Endothelial cell of umbilical vein (primary cell): ENCODE measurements at regions of chr9 and their contacts with region 1.

Region 1: DNA sequence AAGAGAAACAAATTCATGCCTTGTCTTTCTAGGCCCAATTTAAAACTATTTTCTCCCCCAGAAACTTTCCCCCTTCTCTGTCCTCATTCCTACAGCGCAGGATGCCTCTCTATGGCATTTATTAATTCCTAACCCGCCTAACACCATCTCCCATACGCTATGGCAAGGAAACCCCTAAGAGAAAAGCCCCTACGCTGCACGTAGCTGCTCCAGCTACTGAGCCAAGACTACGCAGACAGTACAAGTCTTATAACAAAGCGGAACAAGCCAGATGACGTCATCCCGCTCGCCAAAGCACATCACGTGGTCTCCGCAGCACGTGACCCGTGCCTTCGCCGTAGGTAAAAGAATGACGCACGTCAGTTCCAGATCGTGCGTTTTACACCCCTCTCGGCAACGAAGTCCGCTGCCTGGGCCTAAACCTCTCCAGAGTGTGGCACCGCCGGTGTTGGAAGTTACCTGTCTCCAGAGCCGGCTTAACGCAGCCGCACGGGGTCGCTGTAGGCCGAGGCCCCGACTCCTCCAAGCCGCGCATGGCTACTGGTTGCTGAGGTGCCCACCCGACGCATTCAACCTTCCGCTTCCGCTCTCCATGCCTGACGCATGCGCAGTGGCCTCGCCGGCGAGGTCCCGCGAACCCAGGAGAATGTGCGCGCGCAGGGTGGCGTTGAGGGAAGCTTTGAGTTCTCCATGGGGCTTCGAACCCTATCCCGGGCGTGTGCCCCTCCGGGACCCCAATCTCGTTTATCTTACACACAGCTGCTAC is at the start of gene TRMO:
- DNase-seq: peak; percentile 98
- H3K4me3 ChIP-seq: peak within 1 kb of the TSS; percentile 15 to 71 (median 56)
- H3K27ac ChIP-seq: peak within 1 kb of the TSS; percentile 89
- H3K4me1 ChIP-seq: peaks cover 11% of the 10 kb centered on the region
- H3K27me3 ChIP-seq: peaks cover 8 to 22% of the 10 kb centered on the region in 2 experiments
- CTCF ChIP-seq: peak; percentile 61 to 76
- POLR2A ChIP-seq: peak; percentile 98
- total RNA-seq, gene TRMO: 10.1 and 10.9 TPM in 2 replicates

Region 2: GRCh38 chr9:97411789-97412625 is 510.1 kb before region 1 on chr9 and contains the start of gene TDRD7:
- CTCF ChIA-PET with region 1: no interaction called
- POLR2A ChIA-PET with region 1: no interaction called
- dilution Hi-C with region 1: no loop called
- intact Hi-C with region 1: loop called (anchors 5 kb)
- DNase-seq: peak; percentile 82
- H3K4me3 ChIP-seq: peak within 1 kb of the TSS; percentile 73 to 92 (median 90)
- H3K27ac ChIP-seq: peak within 1 kb of the TSS; percentile 11
- H3K4me1 ChIP-seq: peaks cover 8% of the 10 kb centered on the region
- H3K27me3 ChIP-seq: peaks cover 23 to 29% of the 10 kb centered on the region in 2 experiments
- CTCF ChIP-seq: peak; percentile 99
- POLR2A ChIP-seq: no peak
- total RNA-seq, gene TDRD7: 11.2 and 11.5 TPM in 2 replicates

Region 3: DNA sequence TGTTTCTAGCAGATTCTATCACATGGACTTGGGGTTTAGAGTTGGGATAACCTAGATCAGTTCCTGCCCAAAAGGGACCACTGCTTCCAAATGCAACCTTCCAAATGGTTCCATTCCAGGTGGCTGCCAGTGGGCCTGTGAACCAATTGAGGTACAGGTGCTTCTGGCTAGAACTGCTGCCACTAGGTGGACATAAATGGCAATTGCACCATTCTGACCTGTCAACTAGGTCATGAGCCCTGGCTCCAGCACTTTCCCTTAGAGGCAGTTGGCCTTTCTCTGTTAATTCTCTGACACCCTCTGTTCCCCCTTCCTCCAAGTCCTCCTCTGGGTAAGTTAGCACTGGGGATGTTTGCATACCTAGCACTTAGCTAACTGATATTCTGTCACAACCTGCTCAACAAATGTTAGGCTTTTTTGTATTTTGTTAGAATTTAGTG is 32.4 kb after region 1 on chr9:
- CTCF ChIA-PET with region 1: interaction called, 3 read pairs
- POLR2A ChIA-PET with region 1: no interaction called
- dilution Hi-C with region 1: no loop called
- intact Hi-C with region 1: loop called (anchors 1 kb)
- DNase-seq: peak; percentile 21
- H3K4me3 ChIP-seq: no peak overlapping the region
- H3K27ac ChIP-seq: no peak overlapping the region
- H3K4me1 ChIP-seq: no peaks in the 10 kb centered on the region
- H3K27me3 ChIP-seq: peaks cover 2 to 3% of the 10 kb centered on the region in 2 experiments
- CTCF ChIP-seq: peak; percentile 37 to 58
- POLR2A ChIP-seq: no peak

Region 4: DNA sequence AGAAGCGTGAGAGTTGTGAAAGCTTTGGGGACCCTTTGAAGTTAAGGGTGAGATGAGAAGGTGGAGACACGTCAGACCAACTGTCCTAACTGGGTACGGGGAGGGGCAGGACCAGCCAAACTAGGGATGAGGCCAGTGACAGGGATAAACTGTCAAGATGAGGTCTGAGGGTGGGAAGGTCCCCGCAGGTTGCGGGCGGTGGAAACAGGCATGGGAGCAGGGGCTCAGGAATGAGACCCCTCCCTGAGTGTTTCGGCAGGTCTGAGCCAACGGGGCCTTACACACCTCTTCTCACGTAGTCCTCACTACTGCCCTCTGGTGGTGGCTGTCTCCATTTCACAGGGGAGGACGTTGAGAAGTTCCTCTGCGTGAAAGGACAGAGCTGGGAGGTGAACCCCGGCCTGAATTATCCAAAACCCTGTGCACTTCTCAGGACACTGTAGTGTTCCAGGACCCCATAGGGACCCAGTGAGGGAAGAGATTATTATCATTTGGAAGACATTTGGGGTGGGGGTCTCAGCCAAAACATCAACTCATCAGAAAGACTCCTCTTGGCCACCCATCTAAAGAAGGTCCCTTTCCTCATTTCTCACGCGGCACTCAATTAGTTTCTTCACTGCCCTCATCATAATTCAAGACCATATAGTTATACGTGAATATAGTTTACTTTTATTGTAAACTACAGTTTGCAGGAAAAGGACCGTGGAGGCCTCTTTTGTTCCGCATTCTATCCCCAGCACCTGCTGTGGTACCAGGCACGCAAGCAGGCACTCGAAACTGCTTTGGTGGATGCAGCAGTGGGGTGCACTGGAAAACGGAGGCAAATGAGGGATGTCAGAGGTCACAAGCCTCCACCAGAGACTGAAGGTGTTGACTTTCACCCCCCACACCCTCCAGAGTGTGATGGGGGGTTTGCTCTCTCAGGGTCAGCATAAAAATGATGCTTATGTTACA is 112.7 kb after region 1 on chr9:
- CTCF ChIA-PET with region 1: interaction called, 26 read pairs
- POLR2A ChIA-PET with region 1: no interaction called
- dilution Hi-C with region 1: no loop called
- intact Hi-C with region 1: loop called (anchors 1 kb)
- DNase-seq: peak; percentile 75
- H3K4me3 ChIP-seq: no peak overlapping the region
- H3K27ac ChIP-seq: peak overlapping the region; percentile 65
- H3K4me1 ChIP-seq: peaks cover 13% of the 10 kb centered on the region
- H3K27me3 ChIP-seq: no peaks in the 10 kb centered on the region
- CTCF ChIP-seq: peak; percentile 74 to 87
- POLR2A ChIP-seq: no peak

Region 5: DNA sequence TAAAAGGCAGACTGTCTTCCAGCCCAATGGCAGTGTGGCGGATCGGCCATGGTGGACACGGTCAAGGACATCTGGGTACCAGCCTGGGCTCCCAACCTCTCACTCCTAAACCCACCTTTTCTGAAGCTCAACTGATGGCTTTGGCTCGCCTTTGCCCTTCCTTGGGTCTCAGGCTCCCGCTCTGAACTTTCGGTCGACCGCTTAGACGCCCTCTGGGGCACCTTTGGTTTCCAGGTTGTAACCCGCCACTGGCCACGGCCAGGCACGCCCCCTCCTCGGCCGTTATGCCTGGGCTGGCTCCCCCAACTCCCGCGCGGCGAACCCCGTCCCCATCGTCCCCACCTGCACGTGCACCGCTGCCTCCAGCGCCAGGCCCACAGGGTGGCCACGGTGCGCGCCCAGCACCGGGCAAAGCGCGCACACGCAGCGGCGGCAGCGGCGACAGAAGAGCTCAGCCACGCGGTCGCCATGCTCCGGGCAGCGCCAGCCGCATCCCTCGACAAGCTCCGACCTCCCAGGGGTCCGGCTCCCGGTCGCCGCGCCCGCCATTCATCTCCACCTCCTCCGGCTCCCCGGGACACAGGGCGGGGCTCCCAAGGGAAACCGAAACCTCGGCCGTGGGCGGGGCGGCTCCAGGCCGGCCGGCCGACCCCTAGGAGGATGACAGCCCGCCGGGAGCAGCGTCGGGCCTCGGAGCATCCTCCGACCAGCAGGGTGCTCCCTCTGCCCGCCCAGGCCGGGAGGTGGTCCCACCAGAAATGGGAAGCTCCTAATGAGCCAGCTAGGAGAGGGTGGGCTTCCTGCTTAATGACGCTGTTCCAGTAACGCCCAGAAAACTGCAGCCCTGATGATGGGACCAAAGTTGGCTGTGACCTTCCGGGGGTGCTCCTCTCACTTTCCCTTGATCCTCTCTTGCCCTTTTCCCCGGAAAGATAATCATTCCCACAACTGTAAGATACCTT is 196.8 kb after region 1 on chr9 and contains the start of gene TRIM14:
- CTCF ChIA-PET with region 1: no interaction called
- POLR2A ChIA-PET with region 1: no interaction called
- dilution Hi-C with region 1: no loop called
- intact Hi-C with region 1: loop called (anchors 1 kb)
- DNase-seq: peak; percentile 57
- H3K4me3 ChIP-seq: peak within 1 kb of the TSS; percentile 39 to 84 (median 62)
- H3K27ac ChIP-seq: no peak within 1 kb of the TSS
- H3K4me1 ChIP-seq: peaks cover 12% of the 10 kb centered on the region
- H3K27me3 ChIP-seq: no peaks in the 10 kb centered on the region
- CTCF ChIP-seq: peak in 1 of 2 donors; percentile 20
- POLR2A ChIP-seq: no peak
- total RNA-seq, gene TRIM14: 7.1 and 10.7 TPM in 2 replicates

Region 6: GRCh38 chr9:98255578-98256296 is 333.6 kb after region 1 on chr9 and contains the start of gene TBC1D2:
- CTCF ChIA-PET with region 1: interaction called, 15 read pairs
- POLR2A ChIA-PET with region 1: no interaction called
- dilution Hi-C with region 1: no loop called
- intact Hi-C with region 1: loop called (anchors 1 kb)
- DNase-seq: peak; percentile 94
- H3K4me3 ChIP-seq: peak within 1 kb of the TSS; percentile 67 to 81 (median 80)
- H3K27ac ChIP-seq: peak within 1 kb of the TSS; percentile 75
- H3K4me1 ChIP-seq: peaks cover 22% of the 10 kb centered on the region
- H3K27me3 ChIP-seq: no peaks in the 10 kb centered on the region
- CTCF ChIP-seq: peak in 1 of 2 donors; percentile 24
- POLR2A ChIP-seq: peak; percentile 64
- total RNA-seq, gene TBC1D2: 3.4 and 3.6 TPM in 2 replicates

Region 7: GRCh38 chr9:98523231-98523896 is 601.2 kb after region 1 on chr9:
- CTCF ChIA-PET with region 1: no interaction called
- POLR2A ChIA-PET with region 1: no interaction called
- dilution Hi-C with region 1: no loop called
- intact Hi-C with region 1: loop called (anchors 2 kb)
- DNase-seq: peak; percentile 30
- H3K4me3 ChIP-seq: no peak overlapping the region
- H3K27ac ChIP-seq: peak overlapping the region; percentile 60
- H3K4me1 ChIP-seq: peaks cover 34% of the 10 kb centered on the region
- H3K27me3 ChIP-seq: no peaks in the 10 kb centered on the region
- CTCF ChIP-seq: peak; percentile 17 to 45
- POLR2A ChIP-seq: no peak